GM12878 (cell line): ENCODE measurements at regions of chr6 and their contacts with region 1.

Region 1: GRCh38 chr6:49668082-49668512 is 31.5 kb upstream of the RHAG start:
- DNase-seq: no peak
- ATAC-seq: no peak
- H3K4me3 ChIP-seq: no peak overlapping the region
- H3K27ac ChIP-seq: no peak overlapping the region
- H3K4me1 ChIP-seq: no peaks in the 10 kb centered on the region
- H3K27me3 ChIP-seq: no peaks in the 10 kb centered on the region
- CTCF ChIP-seq: no peak
- EP300 ChIP-seq: no peak
- POLR2A ChIP-seq: no peak
- RAD21 ChIP-seq: no peak

Region 2: DNA sequence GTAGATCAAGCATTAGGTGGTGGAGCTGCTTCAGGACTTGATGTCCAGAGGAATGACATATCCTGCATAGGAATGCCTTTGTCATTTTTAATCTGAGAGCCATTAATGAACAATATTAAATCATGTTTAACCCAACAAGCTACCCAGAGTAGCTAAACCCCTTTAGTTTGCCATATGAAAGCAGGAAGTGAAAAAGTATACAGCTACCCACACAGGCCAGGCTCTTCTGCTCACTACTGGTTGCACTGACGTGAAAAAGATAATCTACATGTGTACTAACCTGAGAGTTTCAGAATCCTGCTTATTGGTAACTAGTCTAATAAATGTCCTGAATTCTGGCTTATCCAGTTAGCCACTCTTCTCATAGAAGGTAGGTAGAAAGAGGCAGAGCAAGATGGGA is 148.4 kb before region 1 on chr6:
- CTCF ChIA-PET with region 1: no interaction called
- POLR2A ChIA-PET with region 1: no interaction called
- RAD21 ChIA-PET with region 1: no interaction called
- SMC1A ChIA-PET with region 1: no interaction called
- in situ Hi-C with region 1: no loop called
- intact Hi-C with region 1: no loop called
- DNase-seq: no peak
- ATAC-seq: peak; percentile 86
- H3K4me3 ChIP-seq: no peak overlapping the region
- H3K27ac ChIP-seq: no peak overlapping the region
- H3K4me1 ChIP-seq: no peaks in the 10 kb centered on the region
- H3K27me3 ChIP-seq: no peaks in the 10 kb centered on the region
- CTCF ChIP-seq: no peak
- EP300 ChIP-seq: no peak
- POLR2A ChIP-seq: no peak
- RAD21 ChIP-seq: no peak

Region 3: DNA sequence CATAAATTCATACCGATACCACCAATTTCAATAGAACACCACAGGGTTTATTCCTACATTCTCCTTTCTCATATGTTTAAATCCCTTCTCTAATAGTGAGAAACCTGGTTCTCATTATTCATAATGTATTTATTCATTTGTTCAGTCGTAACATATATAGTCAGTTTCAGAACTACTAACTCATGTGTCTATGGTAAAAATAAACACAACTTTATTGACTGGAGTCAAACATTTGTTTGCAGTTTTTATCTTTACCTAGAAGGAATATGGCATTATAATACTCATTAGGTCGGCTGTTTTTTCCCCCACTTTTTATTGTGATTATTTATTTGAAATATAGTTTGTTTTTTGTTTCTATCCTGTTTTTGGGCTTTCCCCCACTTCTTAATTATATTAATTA is 17.4 kb after region 1 on chr6:
- CTCF ChIA-PET with region 1: no interaction called
- POLR2A ChIA-PET with region 1: no interaction called
- RAD21 ChIA-PET with region 1: no interaction called
- SMC1A ChIA-PET with region 1: no interaction called
- in situ Hi-C with region 1: no loop called
- intact Hi-C with region 1: no loop called
- DNase-seq: no peak
- ATAC-seq: no peak
- H3K4me3 ChIP-seq: no peak overlapping the region
- H3K27ac ChIP-seq: no peak overlapping the region
- H3K4me1 ChIP-seq: no peaks in the 10 kb centered on the region
- H3K27me3 ChIP-seq: no peaks in the 10 kb centered on the region
- CTCF ChIP-seq: no peak
- EP300 ChIP-seq: no peak
- POLR2A ChIP-seq: no peak
- RAD21 ChIP-seq: no peak

Region 4: DNA sequence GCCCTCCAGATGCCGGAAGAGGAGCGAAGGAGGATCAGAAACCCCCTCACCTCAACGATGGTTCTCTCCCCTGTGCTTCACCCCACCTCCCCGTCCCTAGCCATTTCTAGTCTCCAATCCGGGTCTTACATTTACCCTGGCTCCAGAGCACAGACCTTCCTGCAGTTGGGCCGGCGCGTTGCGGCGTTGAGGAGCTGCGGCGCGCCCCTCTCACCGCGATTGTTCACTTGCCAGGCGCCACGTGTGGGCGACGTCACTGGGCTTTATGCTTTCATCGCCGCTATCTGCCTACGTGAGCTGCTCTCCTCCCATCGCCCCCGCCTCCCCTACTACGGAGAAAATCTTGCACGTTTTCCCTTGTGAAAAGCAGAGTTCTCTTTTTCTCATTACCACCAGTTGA is 45.2 kb after region 1 on chr6 and contains the start of gene CRISP2:
- CTCF ChIA-PET with region 1: no interaction called
- POLR2A ChIA-PET with region 1: no interaction called
- RAD21 ChIA-PET with region 1: no interaction called
- SMC1A ChIA-PET with region 1: no interaction called
- in situ Hi-C with region 1: no loop called
- intact Hi-C with region 1: loop called (anchors 5 kb)
- DNase-seq: no peak
- ATAC-seq: no peak
- H3K4me3 ChIP-seq: no peak within 1 kb of the TSS
- H3K27ac ChIP-seq: no peak within 1 kb of the TSS
- H3K4me1 ChIP-seq: no peaks in the 10 kb centered on the region
- H3K27me3 ChIP-seq: no peaks in the 10 kb centered on the region
- CTCF ChIP-seq: no peak
- EP300 ChIP-seq: no peak
- POLR2A ChIP-seq: no peak
- RAD21 ChIP-seq: no peak
- polyA plus RNA-seq, gene CRISP2: not detected